Tibial artery (tissue), 4 donors: ENCODE measurements at regions of chr15 and their contacts with region 1.

Region 1: DNA sequence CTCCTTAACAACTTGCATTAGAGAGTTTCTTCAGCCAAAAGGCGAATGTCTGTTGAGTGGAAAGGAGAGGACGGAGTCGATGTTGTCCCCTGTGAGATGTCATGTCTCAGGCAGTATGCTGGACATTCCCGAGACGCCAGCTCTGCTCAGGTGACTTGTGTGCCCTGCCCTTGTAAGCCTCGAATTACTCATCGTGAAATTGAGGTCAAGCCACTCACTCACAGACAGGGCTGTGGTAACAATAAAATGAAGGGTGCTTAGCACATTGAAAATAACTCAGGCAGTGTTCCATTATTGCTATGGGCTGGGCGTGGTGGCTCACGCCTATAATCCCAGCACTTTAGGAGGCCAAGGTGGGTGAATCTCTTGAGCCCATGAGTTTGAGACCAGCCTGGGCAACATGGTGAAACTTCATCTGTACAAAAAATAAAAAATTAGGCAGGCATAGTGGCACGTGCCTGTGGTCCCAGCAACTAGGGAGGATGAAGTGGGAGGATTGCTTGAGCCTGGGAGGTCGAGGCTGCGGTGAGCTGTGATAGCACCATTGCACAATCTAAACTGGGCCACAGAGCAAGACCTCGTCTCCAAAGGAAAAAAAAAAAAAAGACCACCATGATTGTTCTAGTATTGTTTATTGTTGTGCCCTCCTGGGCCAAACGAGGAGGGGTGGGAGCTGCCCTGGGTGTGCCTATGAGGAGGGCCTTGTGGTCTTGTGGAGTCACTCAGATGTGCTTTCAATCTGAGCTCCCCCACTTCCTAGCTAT is 214.4 kb downstream of the THSD4 start:
- DNase-seq: peak in 1 of 2 donors; percentile 28
- H3K4me3 ChIP-seq: no peak overlapping the region
- H3K27ac ChIP-seq: peak overlapping the region; percentile 79 to 83
- H3K4me1 ChIP-seq: peaks cover 0 to 75% (median 39%) of the 10 kb centered on the region in 4 donors
- H3K27me3 ChIP-seq: no peaks in the 10 kb centered on the region
- CTCF ChIP-seq: no peak

Region 2: DNA sequence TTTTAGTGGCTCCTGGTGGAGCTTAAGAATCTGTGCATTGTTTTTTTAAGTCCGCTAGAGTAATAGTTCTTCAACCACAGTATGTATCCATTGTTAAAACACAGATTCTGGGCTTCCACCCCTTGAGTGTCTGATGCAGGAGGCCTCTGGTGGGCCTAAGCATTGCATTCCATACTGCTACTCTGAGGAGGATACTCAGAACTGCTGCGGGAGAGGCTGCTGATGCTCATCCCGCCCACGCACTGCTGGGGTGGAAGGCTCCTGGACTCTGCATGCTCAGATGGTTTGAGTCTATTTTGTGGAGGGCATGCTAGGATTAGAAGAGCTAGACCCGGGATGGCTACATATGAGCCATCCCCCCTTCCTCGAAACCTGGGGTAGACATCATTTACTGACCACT is 140.0 kb before region 1 on chr15:
- intact Hi-C with region 1: no loop called
- DNase-seq: no peak
- H3K4me3 ChIP-seq: no peak overlapping the region
- H3K27ac ChIP-seq: no peak overlapping the region
- H3K4me1 ChIP-seq: no peaks in the 10 kb centered on the region
- H3K27me3 ChIP-seq: no peaks in the 10 kb centered on the region
- CTCF ChIP-seq: no peak

Region 3: DNA sequence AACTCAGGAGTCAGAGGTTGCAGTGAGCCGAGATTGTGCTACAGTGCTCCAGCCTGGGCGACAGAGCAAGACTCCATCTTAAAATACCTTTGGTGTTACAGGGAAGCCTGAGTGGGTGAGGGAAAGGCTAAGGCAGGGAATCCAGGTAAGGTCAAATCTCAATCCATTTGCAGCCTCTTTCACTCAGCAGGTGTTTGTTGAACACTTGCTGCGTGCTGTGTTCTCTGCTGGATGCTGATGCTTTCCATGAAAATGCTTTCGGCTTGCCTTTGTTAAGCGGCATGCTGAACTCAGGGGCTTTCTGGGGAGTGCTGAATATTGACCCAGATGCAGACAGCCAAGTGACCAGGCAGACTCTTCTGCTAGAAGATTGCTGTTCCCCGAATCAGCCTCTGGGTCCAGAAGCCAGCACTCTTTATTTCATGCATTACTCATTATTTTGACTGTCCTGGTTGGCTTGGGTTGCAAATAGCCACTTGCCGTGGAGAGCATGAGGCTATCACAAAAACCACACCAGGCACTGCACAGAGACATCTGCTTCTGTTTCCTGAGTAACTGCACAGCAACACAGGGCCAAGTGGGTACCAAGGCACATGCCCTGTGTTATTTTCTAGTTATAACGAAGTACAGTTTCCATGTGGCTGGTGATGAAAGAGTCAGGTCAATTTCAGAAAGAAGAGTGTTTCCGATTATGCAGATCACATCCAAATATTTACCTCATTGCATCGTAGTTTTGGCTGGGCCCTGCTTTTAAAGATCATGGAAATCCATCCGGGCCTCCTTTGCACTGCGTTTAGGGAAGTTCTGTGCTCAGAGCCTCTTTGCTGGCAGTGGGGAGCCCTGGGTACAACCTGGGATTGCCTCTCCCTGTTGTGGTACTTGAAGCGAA is 125.8 kb before region 1 on chr15:
- intact Hi-C with region 1: no loop called
- DNase-seq: no peak
- H3K4me3 ChIP-seq: no peak overlapping the region
- H3K27ac ChIP-seq: no peak overlapping the region
- H3K4me1 ChIP-seq: peaks cover 0 to 14% (median 4%) of the 10 kb centered on the region in 4 donors
- H3K27me3 ChIP-seq: no peaks in the 10 kb centered on the region
- CTCF ChIP-seq: no peak

Region 4: DNA sequence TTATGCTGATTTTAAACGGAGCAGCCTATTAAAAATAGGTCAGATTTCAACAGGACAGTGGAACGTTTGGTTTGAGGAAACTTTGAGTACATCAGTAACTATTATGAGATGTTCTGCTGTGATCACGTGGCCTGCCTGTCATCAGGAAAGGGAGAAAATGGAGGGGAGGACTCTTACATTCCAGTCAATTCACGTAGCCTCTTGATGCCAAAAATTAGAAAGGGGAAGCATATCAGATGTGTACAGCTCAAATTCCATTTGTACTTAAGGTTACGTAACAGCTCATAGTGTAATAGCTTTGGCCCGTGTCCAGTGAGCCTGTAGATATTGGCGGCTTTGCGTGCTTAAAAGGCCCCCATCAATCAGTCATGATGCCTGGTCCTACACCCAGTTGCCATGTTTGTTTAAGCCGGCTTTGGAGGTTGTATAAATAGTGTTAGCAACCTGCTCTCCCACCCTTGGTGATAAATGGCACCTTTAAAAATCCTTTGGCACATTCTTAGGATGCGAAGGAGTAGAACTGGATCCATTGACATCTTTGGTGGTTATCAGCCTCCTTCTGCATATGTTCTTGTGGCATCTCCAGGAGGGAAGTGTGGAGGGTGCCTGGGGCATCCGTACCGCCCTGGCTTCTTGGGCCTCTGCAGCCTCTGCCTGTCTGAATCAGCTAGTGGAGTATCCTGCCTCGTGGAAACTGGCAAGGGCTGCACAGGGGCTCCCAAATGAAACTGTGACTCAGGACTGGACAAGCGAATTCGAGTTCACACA is 50.5 kb before region 1 on chr15:
- intact Hi-C with region 1: loop called (anchors 10 kb)
- DNase-seq: peak; percentile 78 to 81
- H3K4me3 ChIP-seq: no peak overlapping the region
- H3K27ac ChIP-seq: peak overlapping the region; percentile 71 to 72
- H3K4me1 ChIP-seq: peaks cover 0 to 65% (median 38%) of the 10 kb centered on the region in 4 donors
- H3K27me3 ChIP-seq: no peaks in the 10 kb centered on the region
- CTCF ChIP-seq: no peak

Region 5: DNA sequence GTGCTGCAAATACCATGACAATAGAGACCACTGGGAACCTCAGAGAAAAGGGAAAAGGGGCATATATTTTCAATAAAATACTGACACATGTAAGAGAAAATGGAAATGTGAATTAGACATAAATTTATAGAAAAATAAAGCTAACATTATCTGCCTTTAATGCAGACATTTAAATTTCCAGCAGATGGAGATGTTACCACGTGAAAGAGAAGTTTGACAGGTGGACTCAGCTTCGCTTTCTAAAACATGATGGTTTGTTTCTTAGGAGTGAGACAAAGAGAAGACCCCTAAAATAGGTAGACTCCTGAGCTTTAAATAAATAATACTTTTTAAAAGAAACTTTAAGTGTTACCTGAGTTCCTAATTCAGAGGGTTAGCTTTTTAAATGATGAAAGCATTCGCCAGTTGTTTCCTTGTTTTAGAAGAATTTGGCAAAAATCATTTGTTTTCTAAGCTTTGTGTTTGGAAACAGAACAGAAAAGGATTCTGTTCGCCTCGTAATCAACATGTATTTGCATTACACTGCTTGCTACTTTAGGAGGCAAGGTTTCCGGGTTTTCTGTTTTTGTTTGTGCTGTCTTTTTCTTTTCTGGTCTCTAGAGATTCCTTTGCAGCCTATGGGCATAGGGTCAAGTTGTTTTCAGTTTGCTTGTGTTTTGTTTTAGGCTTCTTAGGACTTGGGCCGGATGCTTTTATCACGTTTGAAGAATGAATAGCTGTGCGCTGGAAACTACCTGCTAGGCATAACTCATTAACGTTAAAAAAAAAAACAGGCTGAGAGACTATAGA is 57.0 kb after region 1 on chr15:
- intact Hi-C with region 1: no loop called
- DNase-seq: no peak
- H3K4me3 ChIP-seq: peak overlapping the region in 1 of 2 donors; percentile 6
- H3K27ac ChIP-seq: peak overlapping the region in 1 of 2 donors; percentile 37
- H3K4me1 ChIP-seq: peaks cover 0 to 25% (median 5%) of the 10 kb centered on the region in 4 donors
- H3K27me3 ChIP-seq: no peaks in the 10 kb centered on the region
- CTCF ChIP-seq: peak; percentile 57 to 80